ENCODE measurements at regions of chr16 and their contacts with region 1.

Region 1: GRCh38 chr16:53309457-53309856 is 124.8 kb upstream of the RBL2 start:
- DNase-seq: no peak
- ATAC-seq: no peak

Region 2: DNA sequence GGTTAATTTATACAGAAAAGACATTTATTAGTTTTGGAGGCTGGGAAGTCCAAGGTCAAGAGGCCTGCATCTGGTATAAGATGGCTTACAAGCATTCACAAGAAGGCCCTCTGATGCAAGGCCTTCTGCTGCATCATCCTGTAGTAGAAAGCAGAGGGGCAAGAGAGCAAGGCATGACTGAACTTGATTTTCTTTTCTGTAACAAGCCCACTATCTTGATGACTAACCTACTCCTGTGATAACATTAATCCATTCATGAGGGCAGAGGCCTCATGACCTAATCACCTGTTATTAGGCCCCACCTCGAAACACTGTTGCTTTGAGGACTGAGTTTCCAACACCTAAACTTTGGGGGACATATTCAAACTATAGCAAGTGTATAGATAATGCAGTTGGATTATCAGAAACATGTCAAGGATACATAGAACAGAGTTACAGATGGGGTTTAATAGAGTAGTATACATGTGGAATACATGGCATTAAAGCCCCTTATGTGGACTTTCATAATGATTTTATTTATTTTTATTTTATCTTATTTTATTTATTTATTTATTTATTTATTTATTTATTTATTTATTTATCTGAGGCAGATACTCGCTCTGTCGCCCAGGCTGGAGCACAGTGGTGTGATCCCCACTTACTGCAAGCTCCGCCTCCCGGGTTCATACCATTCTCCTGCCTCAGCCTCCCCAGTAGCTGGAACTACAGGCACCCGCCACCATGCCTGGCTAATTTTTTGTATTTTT is 166.5 kb before region 1 on chr16:
- intact Hi-C with region 1: no loop called
- DNase-seq: no peak
- ATAC-seq: no peak

Region 3: DNA sequence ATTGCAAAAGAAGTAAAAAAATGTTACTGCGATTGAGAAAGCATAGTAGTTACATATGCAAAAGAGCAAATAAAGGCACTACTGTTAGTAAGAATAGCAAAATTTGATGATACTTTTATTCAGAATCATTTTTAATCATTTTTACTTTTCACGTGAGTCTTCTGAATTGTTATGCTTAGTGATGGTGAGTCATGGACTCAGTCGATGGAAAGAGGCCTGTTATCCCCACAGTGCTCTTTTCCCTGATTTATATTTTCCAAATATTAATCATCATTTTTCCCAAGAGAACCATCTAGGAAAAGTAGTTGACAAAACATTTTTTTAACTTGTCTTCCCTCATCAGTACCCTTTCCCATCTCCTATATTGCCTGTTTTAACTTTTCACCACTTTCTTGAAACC is 73.6 kb before region 1 on chr16:
- intact Hi-C with region 1: loop called in 1 of 2 experiments (anchors 10 kb)
- DNase-seq: no peak
- ATAC-seq: no peak

Region 4: DNA sequence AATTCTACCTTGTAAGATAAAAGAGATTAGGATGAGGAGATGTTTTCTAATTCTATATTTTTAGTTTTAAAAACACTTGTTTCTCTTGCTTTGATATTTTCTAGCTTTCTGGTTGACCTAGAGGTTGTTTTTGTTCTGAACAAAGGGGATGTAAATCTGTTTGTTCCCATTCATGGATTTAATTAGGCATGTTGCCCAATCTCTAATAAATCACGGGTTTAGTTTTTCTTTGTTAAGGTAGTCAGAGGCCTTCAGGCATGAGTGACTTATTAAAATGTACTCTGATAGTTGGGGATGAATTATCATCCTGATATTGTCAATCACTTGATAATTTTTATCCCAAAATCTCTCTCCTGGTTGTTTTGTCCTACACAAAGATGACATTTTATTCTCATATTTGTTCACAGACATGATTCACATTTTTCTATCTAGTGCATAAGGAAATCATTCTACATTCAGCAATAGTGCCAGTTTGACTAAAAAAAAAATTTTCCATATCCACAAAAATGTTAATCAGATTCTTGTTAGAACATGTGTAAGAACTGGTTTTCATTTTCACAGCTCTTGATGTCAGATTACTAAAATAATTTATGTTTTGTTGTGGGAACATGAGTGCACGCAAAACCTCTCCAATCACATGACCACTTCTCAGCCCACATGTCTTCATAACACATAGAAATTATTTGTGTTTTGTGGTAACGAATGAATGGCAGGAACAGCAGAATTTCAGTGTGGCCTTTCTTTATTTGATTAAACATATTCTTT is 289.2 kb after region 1 on chr16:
- intact Hi-C with region 1: no loop called
- DNase-seq: no peak
- ATAC-seq: no peak

Measured in left colon (tissue), 2 donors.